ENCODE measurements at regions of chr14 and their contacts with region 1.

Region 1: GRCh38 chr14:75794615-75795038 is 133.6 kb downstream of the TTLL5 start:
- H3K4me3 ChIP-seq: no peak overlapping the region
- H3K27ac ChIP-seq: no peak overlapping the region
- H3K4me1 ChIP-seq: no peaks in the 10 kb centered on the region
- CTCF ChIP-seq: peak; percentile 70

Region 2: GRCh38 chr14:75307700-75308379 is 486.8 kb before region 1 on chr14:
- CTCF ChIA-PET with region 1: no interaction called
- POLR2A ChIA-PET with region 1: no interaction called
- H3K4me3 ChIP-seq: no peak overlapping the region
- H3K27ac ChIP-seq: no peak overlapping the region
- H3K4me1 ChIP-seq: 0 out of 2 replicates have a peak, but pooled peaks cover 2% of the 10 kb centered on the region
- CTCF ChIP-seq: peak; percentile 67

Region 3: GRCh38 chr14:75783184-75783583 is 11.4 kb before region 1 on chr14:
- CTCF ChIA-PET with region 1: interaction called, 11 read pairs
- POLR2A ChIA-PET with region 1: no interaction called
- H3K4me3 ChIP-seq: no peak overlapping the region
- H3K27ac ChIP-seq: no peak overlapping the region
- H3K4me1 ChIP-seq: no peaks in the 10 kb centered on the region
- CTCF ChIP-seq: no peak

Region 4: DNA sequence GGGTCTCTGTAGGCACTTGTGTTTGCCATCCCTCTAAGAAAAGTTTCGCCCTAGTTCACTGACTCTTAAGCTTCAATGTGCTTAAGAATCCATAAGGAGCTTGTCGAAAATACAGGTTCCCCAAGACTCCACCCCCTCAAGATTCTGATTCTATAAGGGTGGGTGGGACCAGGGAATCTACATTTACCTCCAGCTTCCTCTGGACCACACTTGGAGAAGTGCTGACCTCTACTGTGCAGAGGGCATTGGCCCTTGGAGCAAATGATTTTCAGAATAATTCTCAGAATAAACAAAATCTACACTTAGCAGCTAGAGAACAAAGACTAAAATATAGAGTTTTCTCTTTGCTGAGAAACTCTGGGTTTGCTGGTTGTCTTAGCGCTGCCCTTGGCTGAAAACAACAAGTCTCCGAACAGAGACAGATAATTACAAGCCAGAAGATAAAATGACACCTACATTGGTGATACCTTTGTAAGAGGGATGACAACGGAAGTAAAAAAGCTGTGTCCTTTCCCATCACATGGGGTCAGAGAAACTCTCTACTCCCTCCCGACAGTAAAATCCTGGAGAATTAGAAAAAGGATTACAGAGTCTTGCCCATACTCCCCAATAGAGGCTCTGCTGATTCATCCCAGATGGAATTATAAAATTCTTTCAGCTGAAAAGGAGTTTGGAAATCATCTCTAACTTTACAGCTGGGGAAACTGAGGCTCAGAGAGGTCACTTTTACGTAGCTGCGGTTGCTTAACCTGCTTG is 182.4 kb after region 1 on chr14:
- CTCF ChIA-PET with region 1: interaction called, 15 read pairs
- POLR2A ChIA-PET with region 1: interaction called, 3 read pairs
- H3K4me3 ChIP-seq: no peak overlapping the region
- H3K27ac ChIP-seq: no peak overlapping the region
- H3K4me1 ChIP-seq: peaks cover 7% of the 10 kb centered on the region
- CTCF ChIP-seq: no peak

Region 5: DNA sequence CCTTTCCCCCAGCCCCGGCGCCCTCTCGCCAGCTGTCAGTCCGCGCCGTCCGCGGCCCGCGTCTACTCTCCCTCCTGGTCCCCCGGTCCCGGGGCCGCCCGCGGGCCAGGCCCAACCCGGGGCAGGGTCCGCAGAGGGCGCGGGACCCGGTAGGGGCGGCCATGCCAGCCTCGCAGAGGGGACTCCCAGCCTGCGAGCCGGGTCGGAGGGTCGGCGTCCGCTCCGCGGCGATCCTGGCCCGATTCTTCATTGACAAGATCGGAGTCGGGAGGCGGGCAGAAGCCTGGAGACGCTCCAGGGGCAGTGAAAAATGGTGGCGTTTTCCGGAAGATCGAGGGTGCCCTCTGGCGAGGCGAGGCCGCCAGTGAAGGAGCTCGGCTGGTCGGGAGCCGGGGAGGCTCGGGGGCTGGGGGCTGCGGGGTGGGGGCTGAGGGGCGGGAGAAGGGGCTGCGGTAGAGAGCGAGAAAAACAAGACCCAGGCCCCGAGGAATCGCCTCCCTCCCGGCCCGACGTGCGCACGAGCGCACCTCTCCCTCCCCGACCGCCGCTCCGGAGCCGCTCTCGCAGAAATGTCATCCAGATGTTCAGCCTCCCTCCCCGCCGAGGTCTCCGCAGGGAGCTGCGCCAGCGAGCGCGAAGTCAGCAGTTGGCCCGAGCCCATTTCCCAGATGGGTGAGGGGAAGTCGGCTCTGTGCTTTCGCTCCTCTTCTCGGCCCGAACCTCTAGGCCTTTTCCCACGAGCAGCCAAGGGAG is 187.8 kb after region 1 on chr14:
- CTCF ChIA-PET with region 1: interaction called, 15 read pairs
- POLR2A ChIA-PET with region 1: interaction called, 3 read pairs
- H3K4me3 ChIP-seq: peak overlapping the region; percentile 58
- H3K27ac ChIP-seq: peak overlapping the region; percentile 86
- H3K4me1 ChIP-seq: peaks cover 7% of the 10 kb centered on the region
- CTCF ChIP-seq: no peak

Measured in HEK293 (cell line).